Activated CD4-positive, alpha-beta memory T cell treated with anti-CD3 and anti-CD28 coated beads for 36 hours (primary cell): ENCODE measurements at regions of chrX and their contacts with region 1.

Region 1: DNA sequence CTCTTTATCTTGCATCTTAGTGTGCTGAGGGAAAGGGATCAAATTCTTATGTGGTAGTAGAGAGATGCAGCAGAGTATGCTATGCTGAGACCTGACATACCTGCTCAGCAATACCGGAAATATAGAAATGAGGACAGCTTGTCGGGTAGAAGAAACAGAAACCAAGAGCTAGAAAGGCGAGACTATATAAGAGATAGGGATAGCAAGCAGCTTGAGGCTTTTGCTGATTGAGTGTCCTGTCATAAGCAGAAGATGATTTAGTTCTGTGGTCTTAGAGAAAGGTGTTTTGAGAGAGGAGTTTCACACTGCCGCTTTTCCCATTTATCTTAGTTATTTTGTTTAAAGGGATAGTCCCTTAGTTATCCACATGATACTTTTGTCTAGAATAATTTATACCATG is 31.7 kb downstream of the USP9X start:
- DNase-seq: no peak
- H3K4me3 Mint-ChIP-seq: peak overlapping the region; percentile 41
- H3K27ac Mint-ChIP-seq: peak overlapping the region; percentile 66
- H3K4me1 Mint-ChIP-seq: peaks cover 72% of the 10 kb centered on the region
- H3K27me3 Mint-ChIP-seq: no peaks in the 10 kb centered on the region

Region 2: GRCh38 chrX:40647307-40648197 is 469.4 kb before region 1 on chrX and contains the start of gene CXorf38:
- CTCF ChIA-PET with region 1: interaction called, 8 read pairs
- POLR2A ChIA-PET with region 1: no interaction called
- intact Hi-C with region 1: loop called (anchors 1 kb)
- DNase-seq: peak; percentile 94
- H3K4me3 Mint-ChIP-seq: peak within 1 kb of the TSS; percentile 96
- H3K27ac Mint-ChIP-seq: peak within 1 kb of the TSS; percentile 94
- H3K4me1 Mint-ChIP-seq: peaks cover 19% of the 10 kb centered on the region
- H3K27me3 Mint-ChIP-seq: no peaks in the 10 kb centered on the region
- total RNA-seq, gene CXorf38: 20.2 to 20.5 TPM

Region 3: DNA sequence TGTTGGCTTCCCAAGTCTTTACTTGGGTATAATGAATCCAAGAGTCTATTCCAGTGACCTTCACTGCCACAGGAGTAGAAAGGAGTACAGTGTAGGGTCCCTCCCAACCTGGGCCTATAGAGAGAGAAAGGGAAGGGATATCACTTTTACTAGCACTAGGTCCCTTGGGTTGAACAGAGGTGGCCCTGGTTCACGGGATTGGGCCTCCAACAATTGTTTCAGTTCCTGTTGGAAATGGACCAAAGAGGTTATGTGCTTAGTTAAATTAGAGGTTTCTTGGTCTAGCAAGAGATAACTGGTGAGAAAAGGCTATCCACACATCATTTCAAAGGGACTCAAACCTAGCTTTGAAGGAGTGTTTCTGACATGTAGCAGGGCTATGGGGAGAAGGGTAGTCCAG is 324.5 kb before region 1 on chrX:
- CTCF ChIA-PET with region 1: interaction called, 12 read pairs
- POLR2A ChIA-PET with region 1: no interaction called
- intact Hi-C with region 1: no loop called
- DNase-seq: no peak
- H3K4me3 Mint-ChIP-seq: no peak overlapping the region
- H3K27ac Mint-ChIP-seq: no peak overlapping the region
- H3K4me1 Mint-ChIP-seq: no peaks in the 10 kb centered on the region
- H3K27me3 Mint-ChIP-seq: no peaks in the 10 kb centered on the region

Region 4: DNA sequence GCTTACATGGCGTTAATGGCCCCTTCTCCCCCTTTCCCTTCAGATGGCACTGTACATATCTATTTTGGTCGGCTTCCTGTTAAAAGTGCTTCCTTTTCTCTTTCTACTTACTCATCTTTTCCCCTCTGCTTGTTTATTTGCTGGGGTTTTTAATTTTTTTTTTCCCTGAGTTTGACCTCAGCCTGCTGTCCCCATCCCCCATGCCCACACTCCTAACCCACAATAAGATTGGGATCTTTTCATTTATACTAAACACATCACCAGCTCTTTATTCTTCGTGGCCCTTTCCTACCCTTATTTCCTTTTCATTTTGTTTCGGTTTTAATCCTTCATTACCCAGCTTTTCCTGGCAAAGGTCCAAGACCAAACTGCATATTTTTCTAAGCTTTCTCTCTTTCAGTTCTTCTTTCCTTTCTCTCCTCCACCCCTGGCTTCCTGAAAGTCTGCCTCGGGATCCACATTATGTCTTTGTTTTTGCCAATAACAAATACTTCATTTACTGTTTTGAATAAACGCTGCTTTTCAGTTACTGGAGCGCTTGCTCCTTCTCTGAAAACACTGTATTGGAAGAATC is 183.7 kb before region 1 on chrX:
- CTCF ChIA-PET with region 1: interaction called, 3 read pairs
- POLR2A ChIA-PET with region 1: no interaction called
- intact Hi-C with region 1: loop called (anchors 5 kb)
- DNase-seq: peak; percentile 32
- H3K4me3 Mint-ChIP-seq: peak overlapping the region; percentile 44
- H3K27ac Mint-ChIP-seq: peak overlapping the region; percentile 69
- H3K4me1 Mint-ChIP-seq: peaks cover 23% of the 10 kb centered on the region
- H3K27me3 Mint-ChIP-seq: no peaks in the 10 kb centered on the region

Region 5: DNA sequence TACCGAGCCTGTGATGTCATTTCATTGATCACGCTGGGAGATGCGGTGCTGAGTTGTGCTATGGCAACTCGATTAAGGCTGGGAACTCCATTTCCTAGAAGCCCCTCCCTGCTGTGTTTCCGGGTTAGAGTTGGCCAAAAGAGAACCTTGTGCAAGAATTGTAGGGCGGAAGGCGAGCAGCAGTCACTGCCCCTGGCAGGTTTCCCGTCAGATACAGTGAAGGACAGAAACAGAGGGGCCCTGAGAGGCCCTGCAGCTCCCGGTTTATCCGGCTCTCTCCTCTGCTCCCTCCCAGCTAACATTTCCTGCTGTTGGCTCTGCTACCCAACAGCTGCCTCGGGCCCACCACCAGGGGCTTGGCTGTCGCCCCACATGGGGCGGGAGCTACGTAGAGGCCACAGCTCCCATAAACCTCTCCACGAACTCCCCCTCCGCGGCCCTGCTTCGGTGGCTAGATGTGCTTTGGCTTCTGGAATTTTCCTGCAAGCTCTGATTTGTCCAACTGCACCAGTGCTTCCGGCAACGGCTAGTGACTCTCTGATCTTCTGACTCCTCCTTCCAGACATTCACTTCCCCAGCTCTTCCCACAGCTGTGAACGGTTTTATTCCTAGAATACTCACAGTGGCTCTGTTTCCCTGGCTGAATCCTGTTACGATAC is 106.6 kb before region 1 on chrX:
- CTCF ChIA-PET with region 1: interaction called, 3 read pairs
- POLR2A ChIA-PET with region 1: no interaction called
- intact Hi-C with region 1: loop called (anchors 5 kb)
- DNase-seq: peak; percentile 74
- H3K4me3 Mint-ChIP-seq: peak overlapping the region; percentile 52
- H3K27ac Mint-ChIP-seq: peak overlapping the region; percentile 45
- H3K4me1 Mint-ChIP-seq: peaks cover 20% of the 10 kb centered on the region
- H3K27me3 Mint-ChIP-seq: no peaks in the 10 kb centered on the region

Region 6: GRCh38 chrX:41145920-41146608 is 29.1 kb after region 1 on chrX:
- CTCF ChIA-PET with region 1: no interaction called
- POLR2A ChIA-PET with region 1: no interaction called
- intact Hi-C with region 1: loop called (anchors 2 kb)
- DNase-seq: no peak
- H3K4me3 Mint-ChIP-seq: no peak overlapping the region
- H3K27ac Mint-ChIP-seq: no peak overlapping the region
- H3K4me1 Mint-ChIP-seq: peaks cover 16% of the 10 kb centered on the region
- H3K27me3 Mint-ChIP-seq: no peaks in the 10 kb centered on the region

Region 7: GRCh38 chrX:41734530-41734929 is 617.6 kb after region 1 on chrX:
- CTCF ChIA-PET with region 1: no interaction called
- POLR2A ChIA-PET with region 1: no interaction called
- intact Hi-C with region 1: no loop called
- DNase-seq: peak; percentile 9
- H3K4me3 Mint-ChIP-seq: no peak overlapping the region
- H3K27ac Mint-ChIP-seq: peak overlapping the region; percentile 79
- H3K4me1 Mint-ChIP-seq: peaks cover 29% of the 10 kb centered on the region
- H3K27me3 Mint-ChIP-seq: no peaks in the 10 kb centered on the region